ENCODE measurements at regions of chr11 and their contacts with region 1.

Region 1: GRCh38 chr11:111601979-111602864 is at the start of gene SIK2:
- DNase-seq: peak; percentile 97 to 98 (median 97)
- H3K4me3 ChIP-seq: peak within 1 kb of the TSS; percentile 66
- H3K27ac ChIP-seq: peak within 1 kb of the TSS; percentile 98 to 100
- H3K4me1 ChIP-seq: peaks cover 3% of the 10 kb centered on the region
- H3K27me3 ChIP-seq: no peaks in the 10 kb centered on the region
- CTCF ChIP-seq: peak; percentile 83 to 98 (median 97)
- EP300 ChIP-seq: no peak
- POLR2A ChIP-seq: peak; percentile 43
- total RNA-seq, gene SIK2: 16.0 to 50.5 (median 27.4) TPM

Region 2: DNA sequence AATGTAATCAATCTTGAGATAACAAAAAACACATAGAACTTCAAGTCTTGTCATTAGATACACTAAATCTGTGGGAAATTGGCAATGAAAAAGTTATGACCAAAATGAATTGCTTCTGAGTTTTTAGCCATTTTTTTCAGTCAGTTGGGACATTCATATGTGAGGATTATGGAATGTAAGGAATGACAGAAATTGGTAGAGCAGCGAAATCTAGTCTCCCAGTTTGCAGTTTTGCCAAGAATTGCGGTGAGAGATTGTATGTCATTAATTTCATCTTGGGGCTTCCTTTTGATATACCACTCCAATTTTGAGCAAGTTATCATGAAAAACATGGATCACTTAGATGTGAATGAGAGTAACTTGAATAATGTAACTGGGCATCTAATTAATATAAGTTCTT is 50.0 kb after region 1 on chr11:
- intact Hi-C with region 1: no loop called
- DNase-seq: no peak
- H3K4me3 ChIP-seq: no peak overlapping the region
- H3K27ac ChIP-seq: no peak overlapping the region
- H3K4me1 ChIP-seq: no peaks in the 10 kb centered on the region
- H3K27me3 ChIP-seq: no peaks in the 10 kb centered on the region
- CTCF ChIP-seq: no peak
- EP300 ChIP-seq: no peak
- POLR2A ChIP-seq: no peak

Region 3: GRCh38 chr11:111735262-111736116 is 133.3 kb after region 1 on chr11:
- intact Hi-C with region 1: loop called in 2 of 4 experiments (anchors 2 to 10 kb)
- DNase-seq: peak; percentile 84 to 93 (median 85)
- H3K4me3 ChIP-seq: peak overlapping the region; percentile 41
- H3K27ac ChIP-seq: peak overlapping the region; percentile 90 to 98
- H3K4me1 ChIP-seq: peaks cover 61% of the 10 kb centered on the region
- H3K27me3 ChIP-seq: no peaks in the 10 kb centered on the region
- CTCF ChIP-seq: no peak
- EP300 ChIP-seq: no peak
- POLR2A ChIP-seq: peak; percentile 26

Region 4: DNA sequence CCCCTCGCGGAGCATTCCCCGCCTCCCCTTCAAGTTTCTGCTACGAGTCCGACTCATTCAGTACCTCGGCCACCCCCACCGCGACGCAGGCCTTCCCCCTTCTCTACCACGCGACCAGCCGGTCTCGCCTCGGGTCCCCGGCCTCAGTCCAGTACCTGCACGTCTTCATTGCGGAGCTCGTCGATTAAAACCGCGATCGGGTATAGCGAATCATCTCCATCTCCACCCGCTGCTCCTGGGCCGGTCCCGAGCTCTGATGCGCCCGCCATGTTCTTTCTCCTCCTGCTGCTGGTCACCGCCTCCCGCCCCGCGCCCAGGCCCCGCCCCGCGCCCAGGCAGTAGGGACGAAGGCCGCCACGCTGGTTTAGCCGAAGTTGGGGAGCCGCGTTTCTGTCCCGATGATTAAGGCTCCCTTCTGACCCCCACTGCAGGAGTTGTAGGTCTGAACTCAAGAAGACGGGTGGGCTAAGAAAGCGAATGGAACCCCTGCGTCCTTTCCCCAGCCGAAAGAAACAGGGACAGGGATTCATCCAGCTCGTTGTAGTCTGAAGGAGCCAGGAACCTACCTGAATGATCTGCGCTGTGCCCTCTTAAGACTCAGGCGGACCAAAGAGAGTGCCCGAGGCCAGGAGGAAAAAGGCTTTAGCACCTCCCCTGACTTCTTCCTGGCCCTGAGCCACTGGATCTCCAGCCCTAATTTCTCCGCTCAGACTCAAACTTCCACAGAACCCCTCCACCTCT is 164.0 kb after region 1 on chr11 and contains the start of gene PPP2R1B:
- intact Hi-C with region 1: loop called in 1 of 4 experiments (anchors 5 kb)
- DNase-seq: peak; percentile 79 to 84 (median 83)
- H3K4me3 ChIP-seq: peak within 1 kb of the TSS; percentile 64
- H3K27ac ChIP-seq: peak within 1 kb of the TSS; percentile 70 to 89
- H3K4me1 ChIP-seq: peaks cover 6% of the 10 kb centered on the region
- H3K27me3 ChIP-seq: no peaks in the 10 kb centered on the region
- CTCF ChIP-seq: no peak
- EP300 ChIP-seq: no peak
- POLR2A ChIP-seq: peak; percentile 55
- total RNA-seq, gene PPP2R1B: 17.3 to 36.4 (median 25.9) TPM

Region 5: GRCh38 chr11:111777094-111778046 is 175.1 kb after region 1 on chr11:
- intact Hi-C with region 1: loop called in 3 of 4 experiments (anchors 2 to 5 kb)
- DNase-seq: peak in 1 of 5 donors; percentile 49
- H3K4me3 ChIP-seq: no peak overlapping the region
- H3K27ac ChIP-seq: no peak overlapping the region
- H3K4me1 ChIP-seq: no peaks in the 10 kb centered on the region
- H3K27me3 ChIP-seq: no peaks in the 10 kb centered on the region
- CTCF ChIP-seq: peak; percentile 67 to 95 (median 88)
- EP300 ChIP-seq: no peak
- POLR2A ChIP-seq: no peak

Region 6: DNA sequence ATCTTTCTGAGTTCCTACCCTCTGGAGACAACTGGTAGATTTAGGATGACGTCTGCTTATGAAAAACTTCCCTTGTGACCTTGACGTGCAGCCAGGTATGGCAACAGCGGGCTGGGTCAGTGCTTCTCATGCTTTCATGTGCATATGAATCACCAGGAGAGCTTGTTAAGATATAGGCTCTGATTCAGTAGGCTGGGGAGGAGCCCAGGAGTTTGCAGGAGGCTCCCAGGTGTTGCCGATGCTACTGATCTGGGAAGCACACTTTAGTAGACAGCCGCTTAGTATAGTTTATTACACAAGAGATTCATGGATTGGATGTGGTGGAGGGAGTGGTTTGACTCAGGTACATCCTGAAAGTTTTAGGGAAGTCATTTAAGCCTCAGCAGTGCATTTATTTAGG is 358.7 kb after region 1 on chr11:
- intact Hi-C with region 1: no loop called
- DNase-seq: no peak
- H3K4me3 ChIP-seq: no peak overlapping the region
- H3K27ac ChIP-seq: no peak overlapping the region
- H3K4me1 ChIP-seq: no peaks in the 10 kb centered on the region
- H3K27me3 ChIP-seq: no peaks in the 10 kb centered on the region
- CTCF ChIP-seq: no peak
- EP300 ChIP-seq: no peak
- POLR2A ChIP-seq: no peak

Measured in ovary (tissue), 10 donors.